GM12878 (cell line): ENCODE measurements at regions of chr13 and their contacts with region 1.

Region 1: DNA sequence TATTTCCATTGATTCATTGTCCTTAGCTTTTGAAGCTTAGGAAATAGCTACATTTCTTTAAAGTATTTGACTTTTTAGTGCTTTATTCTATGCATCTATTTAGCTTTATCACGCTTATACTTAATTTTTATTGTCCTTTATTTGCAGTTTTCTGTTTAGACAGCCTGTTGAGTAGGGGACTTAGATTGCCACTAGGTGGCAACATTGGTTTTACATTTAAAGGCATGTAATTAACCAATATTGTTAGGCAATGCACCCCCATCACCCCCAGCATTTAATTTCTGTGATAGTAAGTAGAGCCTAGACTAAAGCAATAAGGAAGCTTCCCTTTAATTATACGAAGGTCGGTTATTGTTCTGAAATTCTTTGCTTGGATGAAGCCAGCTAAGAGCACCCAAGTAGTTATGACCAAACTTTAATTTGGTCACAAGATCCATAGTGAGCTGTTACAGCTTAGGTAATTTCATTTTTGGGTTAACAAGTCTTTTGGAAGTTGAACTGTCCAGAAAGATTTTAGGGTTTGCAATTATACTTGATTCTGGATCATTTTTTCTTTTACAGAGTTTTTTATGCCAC is 36.5 kb downstream of the B3GLCT start:
- DNase-seq: no peak
- ATAC-seq: peak; percentile 84
- H3K4me3 ChIP-seq: no peak overlapping the region
- H3K27ac ChIP-seq: no peak overlapping the region
- H3K4me1 ChIP-seq: no peaks in the 10 kb centered on the region
- H3K27me3 ChIP-seq: no peaks in the 10 kb centered on the region; a peak in 1 of 4 replicates
- CTCF ChIP-seq: peak; percentile 43 to 71 (median 59); a peak in 5 of 6 replicates
- EP300 ChIP-seq: no peak
- POLR2A ChIP-seq: no peak
- RAD21 ChIP-seq: peak; percentile 63

Region 2: GRCh38 chr13:30806784-30807183 is 429.5 kb before region 1 on chr13:
- CTCF ChIA-PET with region 1: no interaction called
- POLR2A ChIA-PET with region 1: no interaction called
- RAD21 ChIA-PET with region 1: no interaction called
- SMC1A ChIA-PET with region 1: no interaction called
- in situ Hi-C with region 1: no loop called
- intact Hi-C with region 1: no loop called
- DNase-seq: no peak
- ATAC-seq: no peak
- H3K4me3 ChIP-seq: no peak overlapping the region
- H3K27ac ChIP-seq: no peak overlapping the region
- H3K4me1 ChIP-seq: no peaks in the 10 kb centered on the region
- H3K27me3 ChIP-seq: no peaks in the 10 kb centered on the region; a peak in 1 of 4 replicates
- CTCF ChIP-seq: no peak
- EP300 ChIP-seq: no peak
- POLR2A ChIP-seq: no peak
- RAD21 ChIP-seq: no peak

Region 3: DNA sequence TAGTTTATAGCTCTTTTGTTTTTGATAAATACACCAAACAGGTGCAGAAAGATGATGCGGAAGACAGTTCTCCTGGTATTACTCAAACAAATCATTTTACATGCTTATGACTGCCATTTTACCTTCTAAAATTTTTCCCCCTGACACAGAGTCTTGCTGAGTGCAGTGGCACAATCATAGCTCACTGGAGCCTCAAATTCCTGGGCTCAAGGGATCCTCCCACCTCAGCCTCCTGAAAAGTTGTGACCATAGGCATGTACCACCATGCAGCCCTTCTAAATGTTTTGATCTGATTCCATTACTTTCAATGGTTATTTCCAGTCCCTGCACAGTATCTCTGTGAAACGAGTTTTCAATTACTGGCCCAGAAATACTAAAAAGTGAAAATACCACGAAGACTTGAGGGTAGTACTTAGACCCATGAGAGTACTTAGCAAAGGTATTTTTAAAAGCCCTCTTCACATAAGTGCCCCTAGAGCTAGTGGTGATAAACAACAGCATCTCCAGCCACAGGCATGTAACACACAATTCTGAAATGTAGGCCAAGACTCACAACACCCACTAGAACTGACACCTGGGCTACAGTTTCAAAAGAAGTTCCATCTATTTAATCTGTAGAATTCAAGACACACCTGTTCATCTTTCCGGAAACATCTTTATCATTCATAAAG is 85.8 kb before region 1 on chr13:
- CTCF ChIA-PET with region 1: no interaction called
- POLR2A ChIA-PET with region 1: no interaction called
- RAD21 ChIA-PET with region 1: no interaction called
- SMC1A ChIA-PET with region 1: no interaction called
- in situ Hi-C with region 1: no loop called
- intact Hi-C with region 1: no loop called
- DNase-seq: no peak
- ATAC-seq: peak; percentile 29; the same call in 2 of the 3 replicates
- H3K4me3 ChIP-seq: no peak overlapping the region
- H3K27ac ChIP-seq: no peak overlapping the region
- H3K4me1 ChIP-seq: no peaks in the 10 kb centered on the region
- H3K27me3 ChIP-seq: no peaks in the 10 kb centered on the region
- CTCF ChIP-seq: no peak
- EP300 ChIP-seq: no peak
- POLR2A ChIP-seq: no peak
- RAD21 ChIP-seq: no peak

Region 4: GRCh38 chr13:31409678-31410356 is 173.5 kb after region 1 on chr13:
- CTCF ChIA-PET with region 1: interaction called, 10 read pairs
- POLR2A ChIA-PET with region 1: no interaction called
- RAD21 ChIA-PET with region 1: no interaction called
- SMC1A ChIA-PET with region 1: no interaction called
- in situ Hi-C with region 1: no loop called
- intact Hi-C with region 1: loop called (anchors 5 kb)
- DNase-seq: no peak
- ATAC-seq: no peak; the same call in 2 of the 3 replicates
- H3K4me3 ChIP-seq: no peak overlapping the region
- H3K27ac ChIP-seq: no peak overlapping the region
- H3K4me1 ChIP-seq: no peaks in the 10 kb centered on the region
- H3K27me3 ChIP-seq: no peaks in the 10 kb centered on the region
- CTCF ChIP-seq: no peak; a peak in 1 of 6 replicates
- EP300 ChIP-seq: no peak
- POLR2A ChIP-seq: no peak
- RAD21 ChIP-seq: no peak

Region 5: DNA sequence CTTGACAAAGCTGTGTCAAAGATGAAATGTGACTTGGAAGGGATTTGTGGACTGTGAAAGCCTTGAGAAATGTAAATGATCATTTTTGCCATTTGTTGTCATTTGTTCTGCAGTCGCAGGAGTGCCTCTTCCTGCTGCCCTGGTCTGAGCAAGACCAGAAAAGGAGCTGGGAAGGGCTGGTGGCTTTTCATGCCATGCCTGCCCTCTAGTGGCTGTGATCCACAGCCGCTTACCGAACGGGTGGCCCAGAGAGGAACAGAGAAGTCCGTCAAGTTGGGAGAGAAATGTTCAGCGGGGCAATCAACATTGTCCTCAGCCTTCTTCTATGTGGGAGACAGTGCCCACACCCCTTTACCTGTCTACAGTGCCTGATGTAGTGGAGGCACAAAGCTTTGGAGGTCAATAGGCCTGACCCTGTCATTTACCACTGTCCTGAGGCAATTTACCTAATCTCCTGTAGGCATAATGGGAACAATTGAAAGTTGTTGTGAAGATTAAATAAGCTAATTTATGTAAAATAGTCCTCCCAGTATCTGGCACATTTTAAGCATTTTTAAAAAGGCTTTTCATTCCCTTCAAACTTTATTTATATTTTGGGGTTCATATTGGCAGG is 187.9 kb after region 1 on chr13:
- CTCF ChIA-PET with region 1: interaction called, 72 read pairs
- POLR2A ChIA-PET with region 1: no interaction called
- RAD21 ChIA-PET with region 1: interaction called, 10 read pairs
- SMC1A ChIA-PET with region 1: interaction called, 44 read pairs
- in situ Hi-C with region 1: loop called (anchors 5 kb)
- intact Hi-C with region 1: loop called (anchors 1 kb)
- DNase-seq: peak; percentile 13
- ATAC-seq: peak; percentile 100
- H3K4me3 ChIP-seq: no peak overlapping the region
- H3K27ac ChIP-seq: no peak overlapping the region
- H3K4me1 ChIP-seq: no peaks in the 10 kb centered on the region
- H3K27me3 ChIP-seq: 0 out of 4 replicates have a peak, but pooled peaks cover 0 to 3% of the 10 kb centered on the region in 2 experiments
- CTCF ChIP-seq: peak; percentile 91 to 93 (median 92)
- EP300 ChIP-seq: no peak
- POLR2A ChIP-seq: no peak
- RAD21 ChIP-seq: peak; percentile 79

Region 6: DNA sequence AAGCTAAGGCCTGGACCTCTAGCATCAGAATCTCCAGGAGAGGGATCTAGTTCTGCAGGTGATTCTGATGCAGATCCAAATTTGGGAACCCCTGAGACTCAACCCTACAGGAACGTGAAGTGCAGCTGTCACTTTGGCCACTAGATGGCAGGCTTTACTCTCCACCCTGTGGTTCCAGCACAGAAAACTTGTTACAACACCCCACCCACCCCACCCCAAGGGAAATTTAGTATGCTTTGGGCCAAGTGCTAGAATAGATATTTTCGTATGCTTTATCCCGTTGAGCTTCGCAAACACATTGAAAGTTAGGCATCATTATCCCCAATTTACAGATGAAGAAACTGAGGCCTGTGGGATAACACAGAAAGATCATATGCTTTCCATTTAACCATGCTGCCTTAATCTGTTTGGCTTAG is 195.4 kb after region 1 on chr13:
- CTCF ChIA-PET with region 1: interaction called, 12 read pairs
- POLR2A ChIA-PET with region 1: no interaction called
- RAD21 ChIA-PET with region 1: no interaction called
- SMC1A ChIA-PET with region 1: interaction called, 4 read pairs
- in situ Hi-C with region 1: no loop called
- intact Hi-C with region 1: no loop called
- DNase-seq: no peak
- ATAC-seq: peak; percentile 85
- H3K4me3 ChIP-seq: no peak overlapping the region
- H3K27ac ChIP-seq: no peak overlapping the region
- H3K4me1 ChIP-seq: no peaks in the 10 kb centered on the region
- H3K27me3 ChIP-seq: no peaks in the 10 kb centered on the region
- CTCF ChIP-seq: peak; percentile 74 to 85 (median 74)
- EP300 ChIP-seq: no peak
- POLR2A ChIP-seq: no peak
- RAD21 ChIP-seq: peak; percentile 68

Region 7: GRCh38 chr13:31733066-31733465 is 496.8 kb after region 1 on chr13:
- CTCF ChIA-PET with region 1: no interaction called
- POLR2A ChIA-PET with region 1: no interaction called
- RAD21 ChIA-PET with region 1: no interaction called
- SMC1A ChIA-PET with region 1: no interaction called
- in situ Hi-C with region 1: loop called (anchors 10 kb)
- intact Hi-C with region 1: no loop called
- DNase-seq: no peak
- ATAC-seq: 0 out of 3 replicates have a peak, but pooled peaks have one; percentile 23
- H3K4me3 ChIP-seq: no peak overlapping the region
- H3K27ac ChIP-seq: no peak overlapping the region
- H3K4me1 ChIP-seq: no peaks in the 10 kb centered on the region
- H3K27me3 ChIP-seq: no peaks in the 10 kb centered on the region
- CTCF ChIP-seq: no peak
- EP300 ChIP-seq: no peak
- POLR2A ChIP-seq: no peak
- RAD21 ChIP-seq: no peak

Region 8: DNA sequence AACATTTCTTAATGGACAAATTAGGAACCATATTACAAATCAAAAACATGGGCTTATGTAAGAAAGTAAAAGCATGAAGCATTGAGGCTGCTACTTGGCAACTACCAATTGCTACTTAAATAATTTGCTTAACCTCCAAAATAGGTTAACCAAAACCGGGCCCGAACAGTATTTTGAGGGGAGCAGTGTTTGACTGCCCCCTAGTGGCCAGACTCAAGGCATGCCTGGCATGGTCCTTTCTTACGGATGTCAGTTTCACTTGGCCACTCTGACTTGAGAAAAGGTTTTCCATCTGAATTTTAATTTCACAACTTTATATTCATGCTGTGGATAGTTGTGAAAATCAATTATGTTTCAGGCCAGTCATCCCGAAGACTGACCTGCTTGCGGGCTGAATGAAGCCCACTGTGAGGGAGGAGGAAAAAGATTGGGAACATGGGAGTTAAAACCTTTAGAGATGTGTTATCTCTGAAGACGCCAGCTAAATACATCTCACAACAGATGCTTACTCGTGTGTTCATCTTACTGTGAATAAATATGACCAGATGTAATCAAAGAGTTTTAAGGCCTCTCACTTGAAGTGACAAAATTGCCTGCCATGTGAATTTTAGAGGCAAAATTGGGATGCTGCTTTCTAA is 505.9 kb after region 1 on chr13:
- CTCF ChIA-PET with region 1: interaction called, 16 read pairs
- POLR2A ChIA-PET with region 1: no interaction called
- RAD21 ChIA-PET with region 1: interaction called, 3 read pairs
- SMC1A ChIA-PET with region 1: interaction called, 5 read pairs
- in situ Hi-C with region 1: loop called (anchors 10 kb)
- intact Hi-C with region 1: loop called (anchors 1 kb)
- DNase-seq: peak; percentile 8
- ATAC-seq: peak; percentile 96
- H3K4me3 ChIP-seq: no peak overlapping the region
- H3K27ac ChIP-seq: no peak overlapping the region
- H3K4me1 ChIP-seq: no peaks in the 10 kb centered on the region
- H3K27me3 ChIP-seq: no peaks in the 10 kb centered on the region; a peak in 1 of 4 replicates
- CTCF ChIP-seq: peak; percentile 92 to 95 (median 93)
- EP300 ChIP-seq: no peak
- POLR2A ChIP-seq: no peak
- RAD21 ChIP-seq: peak; percentile 86